Heart left ventricle (tissue), 16 donors: ENCODE measurements at regions of chr10 and their contacts with region 1.

Region 1: GRCh38 chr10:127587668-127588365 is 38.7 kb downstream of the NPS start:
- DNase-seq: peak in 1 of 5 donors; percentile 25
- ATAC-seq: peak in 1 of 4 donors; percentile 62
- H3K4me3 ChIP-seq: no peak overlapping the region
- H3K27ac ChIP-seq: peak overlapping the region in 10 of 12 donors; percentile 25 to 80 (median 68)
- H3K4me1 ChIP-seq: peaks cover 0 to 26% (median 0%) of the 10 kb centered on the region in 12 donors
- H3K27me3 ChIP-seq: peaks cover 0 to 6% (median 0%) of the 10 kb centered on the region in 9 donors
- CTCF ChIP-seq: no peak
- POLR2A ChIP-seq: no peak

Region 2: GRCh38 chr10:127434006-127434405 is 153.8 kb before region 1 on chr10:
- intact Hi-C with region 1: no loop called
- DNase-seq: no peak
- ATAC-seq: no peak
- H3K4me3 ChIP-seq: no peak overlapping the region
- H3K27ac ChIP-seq: no peak overlapping the region
- H3K4me1 ChIP-seq: no peaks in the 10 kb centered on the region
- H3K27me3 ChIP-seq: no peaks in the 10 kb centered on the region
- CTCF ChIP-seq: no peak
- POLR2A ChIP-seq: no peak

Region 3: DNA sequence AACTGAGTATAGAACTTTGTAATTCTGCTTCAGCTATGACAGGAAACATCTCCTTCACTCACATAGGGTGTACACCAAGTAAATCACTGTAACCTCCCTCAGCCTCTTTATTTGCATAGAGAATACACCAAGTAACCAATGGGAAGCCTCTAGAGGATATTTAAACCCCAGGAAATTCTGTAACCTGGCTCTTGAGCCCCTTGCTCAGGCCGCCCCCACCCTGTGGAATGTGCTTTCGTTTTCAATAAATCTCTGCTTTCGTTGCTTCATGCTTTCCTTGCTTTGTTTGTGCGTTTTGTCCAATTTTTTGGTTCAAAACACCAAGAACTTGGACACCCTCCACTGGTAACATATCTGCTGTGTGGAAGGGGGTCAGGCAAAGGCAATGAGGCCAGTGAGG is 244.7 kb after region 1 on chr10:
- intact Hi-C with region 1: loop called in 1 of 10 experiments (anchors 5 kb)
- DNase-seq: no peak
- ATAC-seq: no peak
- H3K4me3 ChIP-seq: no peak overlapping the region
- H3K27ac ChIP-seq: peak overlapping the region in 1 of 12 donors; percentile 66
- H3K4me1 ChIP-seq: peaks cover 0 to 15% (median 4%) of the 10 kb centered on the region in 12 donors
- H3K27me3 ChIP-seq: peaks cover 0 to 16% (median 0%) of the 10 kb centered on the region in 9 donors
- CTCF ChIP-seq: no peak
- POLR2A ChIP-seq: no peak

Region 4: DNA sequence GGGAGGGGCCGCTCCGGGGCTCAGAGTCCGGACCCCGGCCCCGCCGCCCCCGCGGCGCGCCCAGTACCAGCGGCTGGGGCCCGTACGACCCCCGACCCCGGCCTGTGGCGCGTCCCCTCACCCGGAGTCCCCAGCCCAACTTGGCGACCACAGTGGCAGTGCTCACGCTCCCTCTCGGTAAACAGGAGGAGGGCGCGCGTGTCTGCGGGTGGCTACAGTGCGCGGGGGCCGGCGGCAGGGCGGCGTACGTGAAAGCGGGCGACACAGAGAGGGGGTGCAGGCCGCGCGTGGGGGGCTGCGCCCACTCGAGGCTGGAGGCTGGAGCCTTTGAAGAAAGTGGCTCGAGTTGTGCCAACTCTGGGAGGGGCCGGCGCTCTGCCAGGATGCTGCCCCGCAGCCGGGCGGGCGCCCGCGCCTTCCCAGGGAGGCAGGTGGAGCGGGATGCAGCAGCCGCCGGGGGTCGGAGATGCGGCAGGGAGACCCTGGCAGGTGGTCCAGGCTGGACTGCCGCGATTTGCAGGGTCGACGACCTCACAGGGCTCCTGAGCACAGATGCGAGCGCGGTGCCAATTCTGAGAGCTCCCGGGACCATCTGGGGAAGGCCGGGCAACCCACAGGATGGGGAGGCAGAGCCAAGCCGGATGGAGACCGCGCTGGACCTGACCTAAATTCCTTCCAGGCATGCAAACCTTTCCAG is 319.7 kb after region 1 on chr10:
- intact Hi-C with region 1: no loop called
- DNase-seq: peak; percentile 62 to 82 (median 74)
- ATAC-seq: peak in 3 of 4 donors; percentile 38 to 57 (median 43)
- H3K4me3 ChIP-seq: peak overlapping the region; percentile 58 to 92 (median 76)
- H3K27ac ChIP-seq: peak overlapping the region; percentile 85 to 98 (median 91)
- H3K4me1 ChIP-seq: peaks cover 0 to 55% (median 35%) of the 10 kb centered on the region in 12 donors
- H3K27me3 ChIP-seq: no peaks in the 10 kb centered on the region
- CTCF ChIP-seq: peak in 1 of 12 donors; percentile 13
- POLR2A ChIP-seq: no peak